CD8-positive, alpha-beta T cell (primary cell): ENCODE measurements at regions of chr16 and their contacts with region 1.

Region 1: GRCh38 chr16:66872943-66873684 is 7.2 kb upstream of the PDP2 start:
- DNase-seq: peak; percentile 68 to 96 (median 89)
- ATAC-seq: peak; percentile 84
- H3K4me3 ChIP-seq: peak overlapping the region; percentile 53 to 57
- H3K4me3 Mint-ChIP-seq: peak overlapping the region; percentile 74
- H3K27ac ChIP-seq: peak overlapping the region; percentile 11 to 68
- H3K27ac Mint-ChIP-seq: peak overlapping the region; percentile 34
- H3K4me1 ChIP-seq: peaks cover 9% of the 10 kb centered on the region
- H3K4me1 Mint-ChIP-seq: peaks cover 25% of the 10 kb centered on the region
- H3K27me3 ChIP-seq: no peaks in the 10 kb centered on the region
- H3K27me3 Mint-ChIP-seq: no peaks in the 10 kb centered on the region
- CTCF ChIP-seq: peak; percentile 92

Region 2: DNA sequence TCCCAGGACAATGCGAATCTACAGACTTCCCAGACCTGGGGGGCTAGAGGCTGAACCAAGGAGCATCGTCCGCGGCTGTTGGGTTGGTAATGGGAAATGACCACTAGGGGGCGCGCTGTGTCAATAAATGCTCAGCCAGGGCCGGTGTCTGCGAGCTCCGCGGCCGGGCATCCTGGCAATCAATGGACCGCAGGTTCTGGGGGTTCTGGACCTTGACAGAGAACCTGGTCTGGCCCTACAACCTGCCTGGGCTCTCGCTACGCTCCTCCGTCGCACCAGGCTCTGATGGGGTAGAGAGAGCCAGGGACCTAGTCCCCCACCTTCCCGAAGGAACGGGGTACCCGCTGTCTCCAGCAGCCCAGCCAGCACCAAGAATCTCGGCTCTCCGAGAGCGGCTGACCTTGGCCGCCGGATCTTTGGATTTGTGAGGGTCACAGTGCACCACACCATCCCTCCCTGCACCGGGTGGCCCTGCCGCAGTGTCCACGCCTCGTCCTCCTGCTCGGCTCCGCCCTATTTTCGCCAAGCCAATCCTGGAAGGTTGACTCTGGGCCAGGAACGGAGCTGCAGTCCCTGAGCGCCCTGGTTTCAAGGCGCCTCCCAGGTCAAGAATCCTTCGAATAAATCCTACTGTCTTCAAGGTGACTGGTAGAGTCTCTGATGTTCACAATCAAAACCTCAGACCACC is 466.4 kb before region 1 on chr16:
- CTCF ChIA-PET with region 1: interaction called, 17 read pairs
- POLR2A ChIA-PET with region 1: no interaction called
- intact Hi-C with region 1: loop called in 1 of 2 experiments (anchors 1 kb)
- DNase-seq: peak; percentile 75 to 97 (median 87)
- ATAC-seq: peak; percentile 75
- H3K4me3 ChIP-seq: peak overlapping the region; percentile 60 to 66
- H3K4me3 Mint-ChIP-seq: peak overlapping the region; percentile 83
- H3K27ac ChIP-seq: no peak overlapping the region
- H3K27ac Mint-ChIP-seq: no peak overlapping the region
- H3K4me1 ChIP-seq: peaks cover 21% of the 10 kb centered on the region
- H3K4me1 Mint-ChIP-seq: peaks cover 26% of the 10 kb centered on the region
- H3K27me3 ChIP-seq: no peaks in the 10 kb centered on the region
- H3K27me3 Mint-ChIP-seq: peaks cover 5% of the 10 kb centered on the region
- CTCF ChIP-seq: peak; percentile 90

Region 3: GRCh38 chr16:66728117-66728787 is 144.9 kb before region 1 on chr16:
- CTCF ChIA-PET with region 1: interaction called, 20 read pairs
- POLR2A ChIA-PET with region 1: no interaction called
- intact Hi-C with region 1: loop called (anchors 2 to 5 kb)
- DNase-seq: peak in 2 of 9 experiments; percentile 49 to 64
- ATAC-seq: peak; percentile 83
- H3K4me3 ChIP-seq: no peak overlapping the region
- H3K4me3 Mint-ChIP-seq: no peak overlapping the region
- H3K27ac ChIP-seq: no peak overlapping the region
- H3K27ac Mint-ChIP-seq: no peak overlapping the region
- H3K4me1 ChIP-seq: no peaks in the 10 kb centered on the region
- H3K4me1 Mint-ChIP-seq: peaks cover 4% of the 10 kb centered on the region
- H3K27me3 ChIP-seq: no peaks in the 10 kb centered on the region
- H3K27me3 Mint-ChIP-seq: no peaks in the 10 kb centered on the region
- CTCF ChIP-seq: peak; percentile 70

Region 4: GRCh38 chr16:66830422-66831404 is 42.4 kb before region 1 on chr16 and contains the start of gene NAE1:
- CTCF ChIA-PET with region 1: interaction called, 53 read pairs
- POLR2A ChIA-PET with region 1: interaction called, 10 read pairs
- intact Hi-C with region 1: loop called (anchors 1 kb)
- DNase-seq: peak; percentile 78 to 95 (median 88)
- ATAC-seq: peak; percentile 97
- H3K4me3 ChIP-seq: peak within 1 kb of the TSS; percentile 66 to 82
- H3K4me3 Mint-ChIP-seq: peak within 1 kb of the TSS; percentile 77
- H3K27ac ChIP-seq: peak within 1 kb of the TSS in 1 of 2 experiments; percentile 72
- H3K27ac Mint-ChIP-seq: peak within 1 kb of the TSS; percentile 45
- H3K4me1 ChIP-seq: peaks cover 18% of the 10 kb centered on the region
- H3K4me1 Mint-ChIP-seq: peaks cover 34% of the 10 kb centered on the region
- H3K27me3 ChIP-seq: no peaks in the 10 kb centered on the region
- H3K27me3 Mint-ChIP-seq: peaks cover 2% of the 10 kb centered on the region
- CTCF ChIP-seq: peak; percentile 98
- total RNA-seq, gene NAE1: 91.9 to 95.9 TPM

Region 5: DNA sequence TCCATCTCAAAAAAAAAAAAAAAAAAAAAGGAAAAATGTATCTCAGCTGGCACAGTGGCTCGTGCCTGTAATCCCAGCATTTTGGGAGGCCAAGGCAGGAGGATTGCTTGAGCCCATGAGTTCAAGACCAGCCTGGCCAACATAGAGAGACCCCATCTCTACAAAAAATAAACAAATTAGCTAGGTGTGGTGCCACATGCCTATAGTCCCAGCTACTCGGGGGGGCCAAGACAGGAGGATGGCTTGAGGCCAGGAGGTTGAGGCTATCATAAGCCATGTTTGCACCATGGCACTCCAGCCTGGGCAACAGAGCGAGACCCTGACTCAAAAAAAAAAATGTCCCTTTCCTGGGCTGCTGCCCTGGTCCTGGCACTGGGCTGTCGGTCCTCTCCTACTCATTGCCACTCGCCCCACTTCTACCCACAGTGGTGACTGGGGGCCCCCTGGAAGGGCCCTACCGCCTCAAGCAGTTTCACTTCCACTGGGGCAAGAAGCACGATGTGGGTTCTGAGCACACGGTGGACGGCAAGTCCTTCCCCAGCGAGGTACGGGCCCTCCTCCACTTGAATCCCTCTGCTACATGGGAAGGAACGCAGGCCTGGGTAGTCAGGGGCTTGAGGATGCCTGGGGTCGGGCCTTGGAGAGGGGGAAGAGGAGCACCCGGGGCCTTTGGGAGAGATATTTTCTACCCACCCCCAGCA is 22.8 kb before region 1 on chr16:
- CTCF ChIA-PET with region 1: interaction called, 20 read pairs
- POLR2A ChIA-PET with region 1: no interaction called
- intact Hi-C with region 1: no loop called
- DNase-seq: no peak
- ATAC-seq: no peak
- H3K4me3 ChIP-seq: no peak overlapping the region
- H3K4me3 Mint-ChIP-seq: no peak overlapping the region
- H3K27ac ChIP-seq: no peak overlapping the region
- H3K27ac Mint-ChIP-seq: no peak overlapping the region
- H3K4me1 ChIP-seq: no peaks in the 10 kb centered on the region
- H3K4me1 Mint-ChIP-seq: peaks cover 5% of the 10 kb centered on the region
- H3K27me3 ChIP-seq: no peaks in the 10 kb centered on the region
- H3K27me3 Mint-ChIP-seq: peaks cover 13% of the 10 kb centered on the region
- CTCF ChIP-seq: no peak

Region 6: GRCh38 chr16:66894948-66895688 is 22.0 kb after region 1 on chr16:
- CTCF ChIA-PET with region 1: interaction called, 11 read pairs
- POLR2A ChIA-PET with region 1: no interaction called
- intact Hi-C with region 1: no loop called
- DNase-seq: peak; percentile 16 to 74 (median 56)
- ATAC-seq: peak; percentile 94
- H3K4me3 ChIP-seq: no peak overlapping the region
- H3K4me3 Mint-ChIP-seq: no peak overlapping the region
- H3K27ac ChIP-seq: no peak overlapping the region
- H3K27ac Mint-ChIP-seq: no peak overlapping the region
- H3K4me1 ChIP-seq: peaks cover 3% of the 10 kb centered on the region
- H3K4me1 Mint-ChIP-seq: peaks cover 3% of the 10 kb centered on the region
- H3K27me3 ChIP-seq: no peaks in the 10 kb centered on the region
- H3K27me3 Mint-ChIP-seq: no peaks in the 10 kb centered on the region
- CTCF ChIP-seq: peak; percentile 49